ENCODE measurements at regions of chr15 and their contacts with region 1.

Region 1: GRCh38 chr15:44738340-44738984 is 2.1 kb downstream of the TRIM69 start:
- DNase-seq: no peak
- H3K4me3 ChIP-seq: no peak overlapping the region
- CTCF ChIP-seq: peak; percentile 25

Region 2: DNA sequence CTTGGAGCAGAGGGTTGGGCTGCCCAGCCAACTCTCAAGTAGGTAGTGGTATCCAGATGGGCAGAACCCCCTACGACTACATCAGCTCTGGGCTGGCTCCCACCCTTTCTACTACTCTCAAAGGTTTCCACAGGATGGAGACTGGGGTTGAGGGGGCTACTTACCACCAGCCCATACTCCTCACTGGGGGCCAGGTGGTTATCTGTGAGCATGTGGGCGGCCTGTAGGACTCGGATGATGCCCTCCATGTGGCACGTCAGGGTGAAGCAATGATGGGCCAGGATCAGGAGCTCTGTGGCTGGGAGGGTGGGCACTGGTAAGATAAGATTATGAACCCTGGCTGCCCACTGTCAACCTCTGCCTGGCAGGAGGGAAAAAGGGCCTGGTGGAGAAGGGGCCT is 168.1 kb before region 1 on chr15:
- CTCF ChIA-PET with region 1: interaction called, 11 read pairs
- POLR2A ChIA-PET with region 1: no interaction called
- DNase-seq: no peak
- H3K4me3 ChIP-seq: no peak overlapping the region
- CTCF ChIP-seq: no peak

Region 3: GRCh38 chr15:44593042-44593736 is 145.3 kb before region 1 on chr15:
- CTCF ChIA-PET with region 1: interaction called, 51 read pairs
- POLR2A ChIA-PET with region 1: no interaction called
- DNase-seq: no peak
- H3K4me3 ChIP-seq: no peak overlapping the region
- CTCF ChIP-seq: peak; percentile 5

Region 4: GRCh38 chr15:44663409-44664308 is 74.8 kb before region 1 on chr15 and contains the start of gene SPG11:
- CTCF ChIA-PET with region 1: interaction called, 153 read pairs
- POLR2A ChIA-PET with region 1: no interaction called
- DNase-seq: peak; percentile 81
- H3K4me3 ChIP-seq: peak within 1 kb of the TSS; percentile 86
- CTCF ChIP-seq: peak; percentile 89

Region 5: DNA sequence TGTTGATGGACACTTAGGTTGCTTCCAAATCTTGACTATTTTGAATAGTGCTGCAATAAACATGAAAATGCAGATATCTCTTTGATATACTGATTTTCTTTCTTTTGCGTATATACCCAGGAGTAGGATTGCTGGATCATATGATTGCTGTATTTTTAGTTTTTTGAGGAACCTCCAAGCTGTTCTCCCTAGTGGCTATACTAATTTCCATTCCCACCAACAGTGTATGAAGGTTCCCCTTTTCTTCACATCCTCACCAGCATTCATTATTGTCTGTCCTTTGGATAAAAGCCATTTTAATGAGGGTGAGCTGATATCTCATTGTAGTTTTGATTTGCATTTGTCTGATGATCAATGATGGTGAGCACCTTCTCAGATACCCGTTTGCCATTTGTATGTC is 39.8 kb before region 1 on chr15:
- CTCF ChIA-PET with region 1: no interaction called
- POLR2A ChIA-PET with region 1: no interaction called
- DNase-seq: no peak
- H3K4me3 ChIP-seq: no peak overlapping the region
- CTCF ChIP-seq: no peak

Region 6: DNA sequence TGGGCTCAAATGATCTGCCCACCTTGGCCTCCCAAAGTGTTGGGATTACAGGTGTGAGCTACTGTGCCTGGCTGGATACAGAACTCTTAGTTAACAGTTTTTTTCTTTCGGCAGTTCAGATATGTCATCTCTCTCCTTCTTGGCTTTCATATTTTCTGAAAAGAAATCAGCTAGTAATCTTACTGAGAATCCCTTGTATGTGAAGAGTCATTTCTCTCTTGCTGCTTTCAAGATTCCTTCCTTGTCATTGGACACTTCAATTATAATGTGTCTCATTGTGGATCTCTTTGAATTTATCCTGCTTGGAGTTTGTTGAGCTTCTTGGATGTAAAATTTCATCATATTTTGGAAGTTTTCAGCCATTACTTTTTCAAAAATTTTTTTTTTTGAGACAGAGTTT is 14.9 kb after region 1 on chr15:
- CTCF ChIA-PET with region 1: interaction called, 21 read pairs
- POLR2A ChIA-PET with region 1: no interaction called
- DNase-seq: no peak
- H3K4me3 ChIP-seq: no peak overlapping the region
- CTCF ChIP-seq: no peak

Region 7: DNA sequence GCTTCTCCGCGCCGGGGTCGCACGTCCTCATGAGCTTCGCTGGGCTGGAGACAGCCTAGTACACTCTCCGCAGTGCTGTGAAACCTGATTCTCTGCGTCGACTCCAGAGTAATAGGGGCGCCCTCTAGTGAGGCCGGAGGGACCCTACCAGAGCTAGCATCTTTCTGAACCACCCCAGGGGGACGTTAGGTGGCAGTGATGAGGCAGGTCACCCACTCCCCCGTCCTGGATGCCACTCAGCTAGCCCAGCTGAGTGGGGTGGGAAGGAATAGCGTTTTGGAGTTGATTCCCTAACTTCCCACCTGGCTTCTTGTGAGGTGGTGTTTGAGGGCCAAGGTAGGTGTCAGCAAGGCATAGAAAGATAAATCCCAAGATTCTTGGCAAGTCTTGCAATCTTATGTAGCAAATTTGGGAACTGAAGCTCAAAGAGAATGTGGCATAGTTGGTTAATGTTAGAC is 379.7 kb after region 1 on chr15:
- CTCF ChIA-PET with region 1: no interaction called
- POLR2A ChIA-PET with region 1: no interaction called
- DNase-seq: peak; percentile 44
- H3K4me3 ChIP-seq: peak overlapping the region; percentile 18; the same call in 1 of the 2 replicates
- CTCF ChIP-seq: peak; percentile 100

Region 8: DNA sequence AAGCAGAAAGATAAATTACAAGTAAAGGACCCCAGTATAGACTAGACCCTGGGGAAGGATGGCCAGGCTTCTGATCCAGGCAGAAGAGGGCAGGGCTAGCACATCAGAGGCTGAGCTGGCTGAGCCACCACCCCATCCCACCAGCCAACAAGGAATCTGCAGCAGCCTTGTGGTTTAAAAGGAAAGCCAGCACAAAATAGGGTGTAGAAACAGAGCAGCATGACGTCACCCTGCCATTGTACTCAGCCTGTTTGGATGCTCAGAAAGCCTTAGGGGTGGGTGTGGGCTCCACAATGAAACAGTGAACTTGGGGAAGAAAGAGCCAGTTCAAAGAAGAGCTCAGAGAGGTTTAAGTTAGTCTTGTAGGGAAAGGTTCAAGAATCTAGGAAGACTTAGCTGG is 419.5 kb after region 1 on chr15:
- CTCF ChIA-PET with region 1: no interaction called
- POLR2A ChIA-PET with region 1: no interaction called
- DNase-seq: peak; percentile 37
- H3K4me3 ChIP-seq: no peak overlapping the region
- CTCF ChIP-seq: no peak